Heart right ventricle (tissue), 16 donors: ENCODE measurements at regions of chr12 and their contacts with region 1.

Region 1: DNA sequence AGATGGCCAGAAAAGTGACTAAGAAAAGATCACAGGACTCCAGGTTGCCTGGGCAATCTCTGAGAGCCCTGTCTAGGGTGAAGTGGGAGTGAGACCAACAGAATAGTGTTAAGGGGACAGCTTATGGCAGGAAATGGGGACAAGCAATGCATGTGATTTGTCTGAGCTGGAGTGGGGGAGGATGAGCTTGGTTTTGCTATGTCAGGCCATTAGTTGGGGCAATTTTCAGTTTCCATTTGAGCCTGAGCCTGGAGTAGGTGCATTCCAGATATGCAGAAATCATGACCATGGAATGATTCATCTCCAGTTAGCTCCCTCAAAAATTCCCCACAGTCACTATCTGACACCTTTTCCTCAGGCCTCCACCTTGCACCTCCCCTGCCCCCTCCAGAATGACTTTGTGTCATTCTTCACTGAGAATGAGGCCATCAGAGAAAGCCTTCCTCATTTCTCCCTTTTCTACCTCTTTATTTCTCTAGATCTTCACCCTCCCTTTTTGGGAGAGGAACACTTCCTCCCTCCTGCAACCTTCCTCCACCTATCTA is 150.9 kb upstream of the PLEKHG7 start:
- DNase-seq: no peak
- ATAC-seq: no peak
- H3K4me3 ChIP-seq: no peak overlapping the region
- H3K27ac ChIP-seq: peak overlapping the region in 6 of 10 donors; percentile 3 to 93 (median 78)
- H3K4me1 ChIP-seq: peaks cover 8 to 60% (median 32%) of the 10 kb centered on the region in 9 donors
- H3K27me3 ChIP-seq: no peaks in the 10 kb centered on the region
- CTCF ChIP-seq: no peak

Region 2: DNA sequence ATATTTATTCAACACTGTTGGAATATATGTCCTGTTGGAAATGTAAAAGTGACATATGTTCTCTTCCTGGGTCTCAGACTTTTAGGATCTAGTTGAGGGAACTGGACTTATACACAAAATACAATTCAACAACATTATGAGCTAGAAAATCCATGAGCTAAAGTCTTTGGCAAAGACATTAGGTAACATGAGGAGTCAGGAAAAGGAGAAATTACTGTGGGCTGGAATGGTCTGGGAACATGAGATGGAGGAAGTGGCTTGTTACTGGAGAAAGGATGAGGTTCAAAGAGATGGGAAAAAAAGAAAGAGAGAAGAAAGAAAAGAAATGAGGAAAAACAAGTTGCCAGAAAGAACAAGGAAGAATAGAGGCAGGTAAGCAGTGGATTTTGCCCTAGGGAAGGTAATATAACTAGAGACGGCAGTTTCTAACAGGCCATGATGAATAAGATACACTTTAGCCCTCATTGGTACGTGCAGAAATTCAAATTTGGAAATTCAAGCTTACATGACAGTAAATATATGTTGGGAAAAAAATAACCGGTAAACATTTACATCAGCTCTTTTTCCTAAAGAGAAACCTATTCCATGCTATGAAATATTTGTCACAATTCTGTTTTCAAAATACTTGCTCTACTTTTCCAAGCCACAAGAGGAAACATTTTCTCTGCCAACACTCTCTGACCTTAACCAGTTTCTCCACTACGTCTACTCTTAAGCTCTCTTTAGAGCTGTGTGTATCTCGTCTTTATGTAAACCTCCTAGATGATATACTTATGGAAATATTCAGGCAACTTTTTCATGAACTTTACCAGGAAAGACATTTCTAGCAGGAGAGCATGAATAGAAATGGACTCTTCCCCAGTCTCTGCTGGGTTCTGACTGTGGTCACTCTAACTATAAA is 137.5 kb before region 1 on chr12:
- intact Hi-C with region 1: loop called in 2 of 10 experiments (anchors 5 to 10 kb)
- DNase-seq: no peak
- ATAC-seq: peak in 1 of 8 donors; percentile 14
- H3K4me3 ChIP-seq: no peak overlapping the region
- H3K27ac ChIP-seq: peak overlapping the region in 1 of 10 donors; percentile 29
- H3K4me1 ChIP-seq: peaks cover 0 to 42% (median 24%) of the 10 kb centered on the region in 9 donors
- H3K27me3 ChIP-seq: no peaks in the 10 kb centered on the region
- CTCF ChIP-seq: peak in 2 of 9 donors; percentile 8 to 10

Region 3: GRCh38 chr12:93080994-93081797 is 529.3 kb after region 1 on chr12:
- intact Hi-C with region 1: no loop called
- DNase-seq: no peak
- ATAC-seq: no peak
- H3K4me3 ChIP-seq: no peak overlapping the region
- H3K27ac ChIP-seq: no peak overlapping the region
- H3K4me1 ChIP-seq: peaks cover 0 to 8% (median 0%) of the 10 kb centered on the region in 9 donors
- H3K27me3 ChIP-seq: no peaks in the 10 kb centered on the region
- CTCF ChIP-seq: no peak